Activated naive CD4-positive, alpha-beta T cell treated with anti-CD3 and anti-CD28 coated beads, Interleukin-2, amount 10 ng/mL, durations not matched to agents 7 days and 5 days (primary cell): ENCODE measurements at regions of chr16 and their contacts with region 1.

Region 1: GRCh38 chr16:27377666-27378485 is 24.1 kb upstream of the IL21R start:
- DNase-seq: peak; percentile 46
- H3K4me3 Mint-ChIP-seq: peak overlapping the region; percentile 25
- H3K27ac Mint-ChIP-seq: peak overlapping the region; percentile 95
- H3K4me1 Mint-ChIP-seq: peaks cover 51% of the 10 kb centered on the region
- H3K27me3 Mint-ChIP-seq: no peaks in the 10 kb centered on the region

Region 2: DNA sequence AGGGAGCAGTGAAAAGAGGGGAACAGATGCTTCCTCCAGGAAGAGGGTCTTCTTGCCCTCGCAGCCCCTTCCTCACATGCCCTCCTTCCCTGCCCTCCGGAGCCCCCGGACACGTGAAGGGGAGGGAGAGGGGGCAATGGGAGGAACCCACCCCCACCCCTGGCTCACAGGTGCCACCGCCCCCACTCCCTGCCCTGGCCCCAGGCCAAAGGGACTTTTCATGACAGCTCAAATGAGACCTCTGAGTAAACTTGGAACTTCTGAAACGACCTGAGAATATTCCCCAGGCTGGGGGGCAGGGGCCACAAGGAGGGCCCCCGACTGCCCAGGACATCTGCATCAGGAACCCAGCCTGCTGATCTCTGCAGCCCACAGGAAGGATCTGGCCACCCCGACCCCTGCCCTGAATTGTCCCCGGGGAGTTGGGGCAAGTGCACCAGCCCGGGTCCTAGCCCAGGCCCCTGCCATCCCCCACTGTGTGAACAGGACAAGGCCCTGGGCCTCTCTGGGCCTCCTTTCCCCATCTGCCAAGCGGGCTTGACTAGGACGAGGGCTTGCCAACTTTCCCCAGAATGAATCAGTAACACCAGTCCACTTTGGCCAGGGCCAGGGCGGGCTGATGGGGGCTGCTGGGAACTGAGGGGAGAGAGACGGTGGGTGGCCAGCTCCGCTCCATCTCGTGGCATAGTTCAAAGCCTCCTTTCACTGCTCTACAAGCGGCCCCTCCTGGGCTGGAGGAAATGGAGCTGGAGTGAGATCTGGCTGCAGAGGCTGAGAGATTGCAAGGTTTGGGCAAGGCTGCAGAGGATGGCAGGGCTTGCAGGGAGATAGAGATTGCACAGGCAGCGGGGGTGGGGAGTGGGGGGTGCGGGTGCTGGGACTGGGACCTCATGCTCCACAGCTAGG is 27.9 kb after region 1 on chr16:
- CTCF ChIA-PET with region 1: interaction called, 10 read pairs
- DNase-seq: peak; percentile 59
- H3K4me3 Mint-ChIP-seq: peak overlapping the region; percentile 99
- H3K27ac Mint-ChIP-seq: peak overlapping the region; percentile 82
- H3K4me1 Mint-ChIP-seq: peaks cover 85% of the 10 kb centered on the region
- H3K27me3 Mint-ChIP-seq: peaks cover 4% of the 10 kb centered on the region